PC-9 (cell line): ENCODE measurements at regions of chr2 and their contacts with region 1.

Region 1: DNA sequence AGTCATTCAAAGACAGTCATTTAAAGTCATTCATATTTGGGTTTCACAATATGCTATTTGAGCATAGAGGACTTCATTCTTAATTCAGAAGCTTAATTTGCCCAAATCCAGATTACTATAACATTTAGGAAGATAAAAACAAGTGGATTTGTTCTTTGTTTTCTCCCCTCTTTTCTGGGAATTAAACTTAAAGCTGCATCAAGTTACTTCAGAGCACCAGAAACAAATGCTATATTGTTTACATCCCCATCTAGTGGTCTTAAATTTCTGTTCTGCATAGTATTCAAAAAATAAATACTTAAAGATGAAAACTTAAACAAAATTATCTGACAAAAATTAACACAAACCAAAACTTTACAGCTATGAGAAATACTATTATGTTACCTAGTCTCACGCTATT is 34.7 kb upstream of the MARCHF7 start:
- DNase-seq: no peak
- H3K4me3 ChIP-seq: no peak overlapping the region
- H3K27ac ChIP-seq: no peak overlapping the region
- H3K4me1 ChIP-seq: no peaks in the 10 kb centered on the region
- H3K27me3 ChIP-seq: no peaks in the 10 kb centered on the region
- CTCF ChIP-seq: peak; percentile 54; the same call in 1 of the 2 replicates

Region 2: DNA sequence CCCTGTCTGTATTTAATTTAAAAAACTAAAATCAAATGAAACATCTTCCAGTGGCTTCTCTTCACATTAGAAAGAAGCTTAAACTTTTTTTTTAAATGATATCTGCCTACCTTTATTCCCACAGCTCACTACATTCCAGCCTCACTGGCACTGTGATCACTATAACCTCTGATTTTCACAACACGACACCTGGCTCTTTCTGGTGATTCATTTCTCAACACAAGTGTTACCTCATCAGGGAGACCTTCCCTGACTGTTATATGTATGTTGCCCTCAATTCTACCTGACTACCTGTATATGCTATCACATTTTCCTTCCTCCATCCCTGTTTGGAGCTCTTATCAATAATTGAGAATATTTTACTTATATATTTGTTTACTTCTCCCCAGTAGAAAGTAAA is 138.0 kb before region 1 on chr2:
- CTCF ChIA-PET with region 1: no interaction called
- POLR2A ChIA-PET with region 1: no interaction called
- intact Hi-C with region 1: loop called (anchors 10 kb)
- DNase-seq: no peak
- H3K4me3 ChIP-seq: no peak overlapping the region
- H3K27ac ChIP-seq: no peak overlapping the region
- H3K4me1 ChIP-seq: no peaks in the 10 kb centered on the region
- H3K27me3 ChIP-seq: no peaks in the 10 kb centered on the region
- CTCF ChIP-seq: no peak

Region 3: GRCh38 chr2:159658881-159659873 is 18.5 kb before region 1 on chr2:
- CTCF ChIA-PET with region 1: no interaction called
- POLR2A ChIA-PET with region 1: no interaction called
- intact Hi-C with region 1: no loop called
- DNase-seq: no peak
- H3K4me3 ChIP-seq: no peak overlapping the region
- H3K27ac ChIP-seq: no peak overlapping the region
- H3K4me1 ChIP-seq: no peaks in the 10 kb centered on the region
- H3K27me3 ChIP-seq: no peaks in the 10 kb centered on the region
- CTCF ChIP-seq: no peak

Region 4: GRCh38 chr2:159849160-159849813 is 171.6 kb after region 1 on chr2:
- CTCF ChIA-PET with region 1: no interaction called
- POLR2A ChIA-PET with region 1: no interaction called
- intact Hi-C with region 1: no loop called
- DNase-seq: no peak
- H3K4me3 ChIP-seq: no peak overlapping the region
- H3K27ac ChIP-seq: no peak overlapping the region
- H3K4me1 ChIP-seq: no peaks in the 10 kb centered on the region
- H3K27me3 ChIP-seq: no peaks in the 10 kb centered on the region
- CTCF ChIP-seq: no peak